Activated CD4-positive, alpha-beta T cell treated with anti-CD3 and anti-CD28 coated beads for 36 hours (primary cell): ENCODE measurements at regions of chr9 and their contacts with region 1.

Region 1: DNA sequence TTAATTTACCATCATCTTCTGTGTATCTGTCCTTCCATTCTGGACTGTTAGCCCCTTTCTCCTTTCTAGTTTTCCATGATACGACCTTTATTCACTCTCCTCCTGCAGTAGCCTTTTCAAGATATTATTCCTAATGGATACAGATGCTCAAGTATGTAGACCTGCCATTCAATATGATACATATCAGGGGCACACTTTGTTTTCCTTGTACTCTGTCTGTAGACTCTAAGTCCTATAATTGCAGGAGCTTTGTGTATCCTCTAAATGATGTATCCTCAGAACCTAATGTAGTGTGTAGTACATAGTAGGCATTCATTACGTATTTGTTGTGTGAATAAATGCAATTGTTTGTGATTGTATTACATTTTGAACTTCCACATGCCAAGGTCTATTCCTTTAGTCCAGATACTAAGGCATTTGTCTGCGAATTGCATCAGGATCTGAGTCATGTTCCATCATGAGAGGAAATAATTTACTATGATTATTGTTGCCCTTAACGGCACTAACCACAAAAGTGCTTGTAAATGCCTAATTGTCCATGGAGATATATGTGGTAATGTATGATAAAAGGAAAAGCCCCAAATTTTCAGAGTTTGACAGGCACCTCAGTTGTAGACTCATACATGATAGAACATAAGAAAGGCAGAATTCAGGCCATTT is 57.1 kb upstream of the IZUMO3 start:
- DNase-seq: no peak
- ATAC-seq: no peak
- H3K4me3 Mint-ChIP-seq: no peak overlapping the region
- H3K27ac Mint-ChIP-seq: no peak overlapping the region
- H3K4me1 Mint-ChIP-seq: no peaks in the 10 kb centered on the region
- H3K27me3 Mint-ChIP-seq: no peaks in the 10 kb centered on the region

Region 2: GRCh38 chr9:24652181-24652580 is 49.4 kb after region 1 on chr9:
- CTCF ChIA-PET with region 1: no interaction called
- POLR2A ChIA-PET with region 1: no interaction called
- intact Hi-C with region 1: loop called in 1 of 2 experiments (anchors 10 kb)
- DNase-seq: no peak
- ATAC-seq: no peak
- H3K4me3 Mint-ChIP-seq: no peak overlapping the region
- H3K27ac Mint-ChIP-seq: no peak overlapping the region
- H3K4me1 Mint-ChIP-seq: no peaks in the 10 kb centered on the region
- H3K27me3 Mint-ChIP-seq: no peaks in the 10 kb centered on the region

Region 3: DNA sequence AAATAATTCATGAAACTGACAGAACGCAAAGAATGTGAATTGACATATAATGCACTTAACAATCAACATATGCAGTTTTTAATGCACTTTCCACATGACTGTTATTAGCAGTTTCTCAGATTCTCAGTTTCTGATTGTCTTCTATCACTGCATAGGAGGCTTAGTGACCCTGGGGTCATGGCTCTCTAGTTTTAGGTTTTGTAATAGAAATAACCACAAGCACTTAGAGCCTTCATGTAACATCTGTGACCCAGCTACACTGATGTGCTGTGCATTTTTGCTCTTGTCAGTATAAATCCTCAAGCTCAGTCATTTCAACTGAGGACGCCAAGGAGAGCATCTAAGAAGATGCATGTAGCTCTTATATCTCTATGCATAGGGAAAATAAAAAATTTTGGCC is 106.0 kb after region 1 on chr9:
- CTCF ChIA-PET with region 1: no interaction called
- POLR2A ChIA-PET with region 1: no interaction called
- intact Hi-C with region 1: no loop called
- DNase-seq: no peak
- ATAC-seq: no peak
- H3K4me3 Mint-ChIP-seq: no peak overlapping the region
- H3K27ac Mint-ChIP-seq: no peak overlapping the region
- H3K4me1 Mint-ChIP-seq: no peaks in the 10 kb centered on the region
- H3K27me3 Mint-ChIP-seq: no peaks in the 10 kb centered on the region